CD4-positive, alpha-beta memory T cell (primary cell): ENCODE measurements at regions of chr5 and their contacts with region 1.

Region 1: GRCh38 chr5:30874241-30875034 is 319.0 kb upstream of the CDH6 start:
- DNase-seq: no peak
- H3K4me3 ChIP-seq: no peak overlapping the region
- H3K4me3 Mint-ChIP-seq: no peak overlapping the region
- H3K27ac ChIP-seq: no peak overlapping the region
- H3K27ac Mint-ChIP-seq: no peak overlapping the region
- H3K4me1 ChIP-seq: no peaks in the 10 kb centered on the region
- H3K4me1 Mint-ChIP-seq: no peaks in the 10 kb centered on the region
- H3K27me3 ChIP-seq: no peaks in the 10 kb centered on the region
- H3K27me3 Mint-ChIP-seq: no peaks in the 10 kb centered on the region

Region 2: GRCh38 chr5:30099641-30100072 is 774.8 kb before region 1 on chr5:
- CTCF ChIA-PET with region 1: no interaction called
- POLR2A ChIA-PET with region 1: no interaction called
- intact Hi-C with region 1: loop called (anchors 10 kb)
- DNase-seq: no peak
- H3K4me3 ChIP-seq: no peak overlapping the region
- H3K4me3 Mint-ChIP-seq: no peak overlapping the region
- H3K27ac ChIP-seq: no peak overlapping the region
- H3K27ac Mint-ChIP-seq: no peak overlapping the region
- H3K4me1 ChIP-seq: no peaks in the 10 kb centered on the region
- H3K4me1 Mint-ChIP-seq: no peaks in the 10 kb centered on the region
- H3K27me3 ChIP-seq: no peaks in the 10 kb centered on the region
- H3K27me3 Mint-ChIP-seq: no peaks in the 10 kb centered on the region